HepG2 (cell line): ENCODE measurements at regions of chr2 and their contacts with region 1.

Region 1: DNA sequence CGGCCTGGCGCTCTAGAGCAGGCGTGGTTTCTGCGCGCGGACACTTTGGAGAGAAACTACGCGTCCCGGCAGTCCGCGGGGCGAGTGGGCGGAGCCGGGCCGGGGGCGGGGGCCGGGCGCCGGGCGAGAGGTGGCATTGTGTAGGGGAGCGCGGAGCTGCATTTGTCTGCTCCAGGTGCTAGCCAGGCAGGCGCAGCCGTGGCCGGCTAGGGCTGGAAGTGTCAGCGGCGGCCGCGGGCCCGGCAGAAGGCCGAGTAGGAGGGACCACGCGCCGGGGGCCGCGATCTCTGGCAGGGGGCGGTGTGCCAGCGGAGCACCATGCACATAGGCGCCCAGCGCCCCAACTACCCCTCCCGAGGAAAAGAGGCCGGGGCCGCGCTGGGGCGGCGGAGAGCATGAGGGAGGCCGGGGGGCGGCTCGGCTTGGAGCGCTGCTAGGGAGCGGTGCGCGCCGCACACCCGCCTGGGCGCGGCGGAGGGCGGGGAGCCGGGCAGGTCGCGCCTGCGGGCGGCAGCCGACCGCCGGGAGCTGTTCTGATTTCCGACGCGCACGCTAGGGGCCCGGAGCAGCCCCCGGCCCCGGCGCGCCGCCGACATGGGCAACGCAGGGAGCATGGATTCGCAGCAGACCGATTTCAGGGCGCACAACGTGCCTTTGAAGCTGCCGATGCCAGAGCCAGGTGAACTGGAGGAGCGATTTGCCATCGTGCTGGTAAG is at the start of gene FMNL2:
- DNase-seq: peak; percentile 88
- ATAC-seq: peak; percentile 91
- H3K4me3 ChIP-seq: peak within 1 kb of the TSS; percentile 95 to 98 (median 96)
- H3K27ac ChIP-seq: peak within 1 kb of the TSS; percentile 69
- H3K4me1 ChIP-seq: peaks cover 41% of the 10 kb centered on the region
- H3K27me3 ChIP-seq: peaks cover 0 to 20% of the 10 kb centered on the region in 2 experiments; a peak in 4 of 5 replicates
- CTCF ChIP-seq: peak; percentile 52
- EP300 ChIP-seq: peak in 1 of 2 experiments; percentile 44; a peak in 2 of 4 replicates
- POLR2A ChIP-seq: peak; percentile 93 to 97
- RAD21 ChIP-seq: peak; percentile 83
- total RNA-seq, gene FMNL2: 63.2 and 66.5 TPM in 2 replicates

Region 2: DNA sequence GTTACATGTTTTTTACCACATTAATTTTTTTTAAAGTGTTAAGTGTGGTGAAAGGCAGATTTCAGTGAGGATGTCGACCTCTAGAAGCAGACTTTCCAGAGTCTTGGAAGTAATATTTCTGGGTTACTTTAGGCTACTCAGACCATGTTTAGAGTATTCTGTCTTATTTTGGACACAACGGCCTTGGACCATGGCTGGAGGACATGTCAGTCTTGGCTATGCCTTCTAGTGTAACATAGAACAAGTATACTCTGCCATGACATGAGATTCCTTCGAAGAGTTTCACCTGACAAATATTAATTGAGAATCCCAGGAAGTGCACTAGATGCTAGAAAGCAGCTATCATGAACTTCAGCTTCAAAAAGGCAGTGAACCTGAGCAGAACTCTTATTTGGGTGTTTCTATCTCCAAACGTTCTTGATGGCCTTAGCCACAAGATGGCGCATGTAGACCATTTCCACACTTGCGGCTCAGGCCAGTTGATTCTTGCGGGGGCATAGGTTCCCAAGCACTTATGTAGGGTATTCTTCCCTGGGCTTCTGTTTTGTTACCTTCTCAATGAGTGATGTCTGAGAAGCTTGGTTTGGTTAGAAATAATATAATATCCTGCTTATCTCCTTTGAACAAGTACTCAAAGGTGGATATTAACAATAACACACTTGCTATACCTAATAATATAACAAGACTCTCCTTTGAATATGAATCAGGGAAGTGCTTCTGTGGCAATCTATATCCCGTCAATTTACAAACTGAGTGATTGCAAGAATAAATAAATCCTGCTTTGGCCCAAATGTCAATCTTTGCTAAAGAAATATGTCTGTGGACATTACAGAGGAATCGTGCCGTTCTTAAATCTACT is 298.3 kb before region 1 on chr2:
- CTCF ChIA-PET with region 1: no interaction called
- POLR2A ChIA-PET with region 1: no interaction called
- in situ Hi-C with region 1: no loop called
- intact Hi-C with region 1: loop called (anchors 5 kb)
- DNase-seq: peak; percentile 73
- ATAC-seq: peak; percentile 83
- H3K4me3 ChIP-seq: no peak overlapping the region
- H3K27ac ChIP-seq: no peak overlapping the region
- H3K4me1 ChIP-seq: no peaks in the 10 kb centered on the region
- H3K27me3 ChIP-seq: peaks cover 2 to 30% of the 10 kb centered on the region in 2 experiments; a peak in 2 of 5 replicates
- CTCF ChIP-seq: peak; percentile 93
- EP300 ChIP-seq: no peak
- POLR2A ChIP-seq: no peak
- RAD21 ChIP-seq: peak; percentile 77

Region 3: DNA sequence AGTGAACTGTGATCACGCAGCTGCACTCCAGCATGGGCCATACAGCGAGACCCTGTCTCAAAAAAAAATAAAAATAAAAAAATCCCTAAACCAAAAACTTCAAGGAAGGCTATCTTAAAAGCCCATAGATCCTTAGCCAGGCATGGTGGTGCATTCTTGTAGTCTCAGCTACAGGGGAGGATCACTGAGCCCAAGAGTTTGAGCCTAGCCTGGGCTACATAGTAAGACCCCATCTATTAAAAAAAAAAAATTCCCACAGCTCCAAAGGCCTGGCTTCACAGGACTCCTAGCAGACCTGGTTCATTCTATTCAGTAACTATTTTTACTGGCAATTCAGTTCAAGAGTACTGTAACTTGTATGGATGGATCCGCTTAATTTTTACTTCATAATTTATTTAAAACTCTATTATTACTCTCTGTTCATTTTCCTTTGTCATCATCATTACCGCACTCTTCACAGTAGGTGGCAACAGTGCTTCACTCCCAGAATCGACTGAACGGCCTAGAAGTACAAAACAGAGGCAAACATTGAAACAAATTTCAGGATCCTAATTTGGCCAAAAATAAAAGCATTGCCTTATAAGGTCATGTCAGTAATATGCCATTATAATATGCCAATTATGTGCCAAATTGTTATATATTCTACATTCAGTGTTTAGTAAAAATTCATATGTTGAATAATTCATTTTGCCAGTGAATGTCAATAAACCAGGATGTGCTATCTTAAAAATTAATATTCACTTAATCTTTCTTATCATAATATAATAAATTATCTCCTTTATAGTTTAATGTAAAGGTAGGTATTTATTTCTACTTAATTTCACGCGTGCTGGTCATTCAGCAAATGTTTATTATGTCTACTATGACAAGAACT is 145.3 kb before region 1 on chr2:
- CTCF ChIA-PET with region 1: no interaction called
- POLR2A ChIA-PET with region 1: no interaction called
- in situ Hi-C with region 1: no loop called
- intact Hi-C with region 1: loop called (anchors 2 kb)
- DNase-seq: peak; percentile 71
- ATAC-seq: peak; percentile 92
- H3K4me3 ChIP-seq: no peak overlapping the region
- H3K27ac ChIP-seq: no peak overlapping the region
- H3K4me1 ChIP-seq: peaks cover 18% of the 10 kb centered on the region; the same call in 1 of the 2 replicates
- H3K27me3 ChIP-seq: 0 out of 5 replicates have a peak, but pooled peaks cover 0 to 2% of the 10 kb centered on the region in 2 experiments
- CTCF ChIP-seq: peak; percentile 84
- EP300 ChIP-seq: no peak
- POLR2A ChIP-seq: no peak
- RAD21 ChIP-seq: peak; percentile 88

Region 4: DNA sequence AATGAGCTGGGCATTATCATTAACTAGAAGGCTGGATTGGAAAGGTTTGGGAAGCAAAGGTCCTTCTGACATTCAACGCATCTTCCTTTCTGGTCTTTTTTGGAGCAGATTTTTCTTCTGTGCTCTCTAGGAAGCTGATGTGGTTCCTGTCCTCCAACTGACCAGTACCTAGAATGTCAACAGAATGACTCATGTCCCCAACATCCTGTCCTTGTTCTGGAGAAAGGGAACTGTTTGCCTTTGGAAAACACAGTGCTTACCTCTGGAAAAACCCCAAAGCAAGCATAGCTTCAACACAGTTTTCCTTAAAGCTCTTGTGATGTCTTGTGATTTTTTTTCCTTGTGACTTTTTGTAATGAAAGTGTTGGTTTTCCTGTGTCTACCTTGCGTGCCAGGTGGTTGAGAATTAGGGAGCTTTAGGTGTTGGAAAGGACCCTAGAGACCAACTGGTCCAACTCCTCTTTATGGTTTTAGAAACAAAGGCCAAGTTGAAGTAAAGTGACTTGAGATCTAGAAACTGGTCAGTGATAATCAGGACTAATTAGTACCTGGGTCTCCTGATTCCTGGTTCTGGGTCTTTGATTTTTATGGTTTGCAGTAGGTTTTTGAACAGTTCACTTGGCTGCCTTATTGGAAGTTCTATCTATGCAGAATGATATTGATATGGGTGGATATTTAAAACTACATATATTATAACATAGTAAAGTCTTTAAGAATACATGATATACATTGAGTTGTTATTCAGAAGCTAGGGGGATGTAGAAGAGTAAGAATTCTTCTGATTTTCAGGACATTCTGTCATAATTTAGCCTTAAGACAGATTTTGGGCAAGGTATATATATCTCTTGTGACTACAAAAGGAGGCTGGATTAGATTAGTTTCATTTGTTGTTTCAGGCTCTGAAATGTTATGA is 70.3 kb after region 1 on chr2:
- CTCF ChIA-PET with region 1: no interaction called
- POLR2A ChIA-PET with region 1: interaction called, 11 read pairs
- in situ Hi-C with region 1: loop called (anchors 5 kb)
- intact Hi-C with region 1: loop called (anchors 5 kb)
- DNase-seq: peak; percentile 96
- ATAC-seq: peak; percentile 87
- H3K4me3 ChIP-seq: no peak overlapping the region
- H3K27ac ChIP-seq: peak overlapping the region; percentile 56
- H3K4me1 ChIP-seq: peaks cover 96% of the 10 kb centered on the region
- H3K27me3 ChIP-seq: no peaks in the 10 kb centered on the region
- CTCF ChIP-seq: no peak
- EP300 ChIP-seq: peak; percentile 57 to 97; a peak in 3 of 4 replicates
- POLR2A ChIP-seq: no peak
- RAD21 ChIP-seq: no peak

Region 5: DNA sequence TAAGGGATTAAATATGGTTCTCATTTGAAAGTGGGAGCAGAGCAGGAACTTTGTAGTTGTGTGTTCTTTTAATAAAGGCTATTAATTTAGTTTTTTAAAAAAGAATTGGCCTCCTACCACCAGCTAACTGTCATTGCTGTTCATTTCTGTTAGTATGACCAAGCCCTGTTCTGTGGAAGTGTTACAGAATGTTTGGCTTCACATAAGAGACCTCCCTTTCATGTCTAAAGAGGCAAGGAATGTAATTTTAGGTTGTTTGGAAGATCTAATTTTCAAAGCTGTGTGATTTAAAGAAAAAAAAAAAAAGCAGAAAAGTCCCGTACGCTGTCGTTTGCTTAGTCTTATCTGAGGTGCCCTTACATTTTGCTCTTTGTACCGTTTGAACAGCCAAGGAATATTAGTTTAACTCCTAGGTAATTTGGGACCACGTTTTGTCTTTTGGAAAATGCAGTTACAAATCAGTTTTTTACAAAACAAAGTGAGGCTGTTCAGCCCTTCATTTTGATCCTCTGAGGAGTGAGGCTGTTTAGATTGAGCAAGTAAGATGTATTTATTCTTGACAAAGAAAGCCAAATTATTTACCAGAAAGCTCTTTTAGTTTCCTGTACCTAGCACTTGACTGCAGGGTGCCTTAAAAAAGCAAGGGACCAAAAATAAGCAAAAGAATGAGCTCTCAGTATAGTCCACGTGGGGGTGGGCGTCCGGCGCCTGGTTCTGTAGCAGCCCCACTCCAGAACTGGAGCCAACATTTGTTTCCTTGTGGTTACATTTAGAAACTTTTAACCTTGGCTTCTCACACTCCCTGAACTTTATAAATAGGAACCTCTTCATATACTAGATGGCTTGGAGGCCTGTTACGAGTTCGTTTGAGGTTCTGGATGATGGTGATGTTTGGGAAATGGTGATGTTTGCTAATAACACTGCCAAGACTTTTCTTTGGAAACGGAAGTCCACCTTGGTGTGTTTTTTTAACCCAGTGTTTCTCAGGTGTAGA is 136.0 kb after region 1 on chr2:
- CTCF ChIA-PET with region 1: no interaction called
- POLR2A ChIA-PET with region 1: interaction called, 4 read pairs
- in situ Hi-C with region 1: no loop called
- intact Hi-C with region 1: loop called (anchors 5 kb)
- DNase-seq: peak; percentile 46
- ATAC-seq: peak; percentile 29
- H3K4me3 ChIP-seq: peak overlapping the region in 2 of 3 experiments; percentile 29 to 34; a peak in 3 of 6 replicates
- H3K27ac ChIP-seq: peak overlapping the region; percentile 57
- H3K4me1 ChIP-seq: peaks cover 98% of the 10 kb centered on the region
- H3K27me3 ChIP-seq: no peaks in the 10 kb centered on the region
- CTCF ChIP-seq: no peak
- EP300 ChIP-seq: peak in 1 of 2 experiments; percentile 42; a peak in 1 of 4 replicates
- POLR2A ChIP-seq: no peak
- RAD21 ChIP-seq: no peak

Region 6: GRCh38 chr2:152505495-152505906 is 170.3 kb after region 1 on chr2:
- CTCF ChIA-PET with region 1: no interaction called
- POLR2A ChIA-PET with region 1: no interaction called
- in situ Hi-C with region 1: no loop called
- intact Hi-C with region 1: no loop called
- DNase-seq: no peak
- ATAC-seq: no peak
- H3K4me3 ChIP-seq: no peak overlapping the region
- H3K27ac ChIP-seq: no peak overlapping the region
- H3K4me1 ChIP-seq: peaks cover 51% of the 10 kb centered on the region
- H3K27me3 ChIP-seq: no peaks in the 10 kb centered on the region
- CTCF ChIP-seq: no peak
- EP300 ChIP-seq: no peak
- POLR2A ChIP-seq: no peak
- RAD21 ChIP-seq: no peak

Region 7: DNA sequence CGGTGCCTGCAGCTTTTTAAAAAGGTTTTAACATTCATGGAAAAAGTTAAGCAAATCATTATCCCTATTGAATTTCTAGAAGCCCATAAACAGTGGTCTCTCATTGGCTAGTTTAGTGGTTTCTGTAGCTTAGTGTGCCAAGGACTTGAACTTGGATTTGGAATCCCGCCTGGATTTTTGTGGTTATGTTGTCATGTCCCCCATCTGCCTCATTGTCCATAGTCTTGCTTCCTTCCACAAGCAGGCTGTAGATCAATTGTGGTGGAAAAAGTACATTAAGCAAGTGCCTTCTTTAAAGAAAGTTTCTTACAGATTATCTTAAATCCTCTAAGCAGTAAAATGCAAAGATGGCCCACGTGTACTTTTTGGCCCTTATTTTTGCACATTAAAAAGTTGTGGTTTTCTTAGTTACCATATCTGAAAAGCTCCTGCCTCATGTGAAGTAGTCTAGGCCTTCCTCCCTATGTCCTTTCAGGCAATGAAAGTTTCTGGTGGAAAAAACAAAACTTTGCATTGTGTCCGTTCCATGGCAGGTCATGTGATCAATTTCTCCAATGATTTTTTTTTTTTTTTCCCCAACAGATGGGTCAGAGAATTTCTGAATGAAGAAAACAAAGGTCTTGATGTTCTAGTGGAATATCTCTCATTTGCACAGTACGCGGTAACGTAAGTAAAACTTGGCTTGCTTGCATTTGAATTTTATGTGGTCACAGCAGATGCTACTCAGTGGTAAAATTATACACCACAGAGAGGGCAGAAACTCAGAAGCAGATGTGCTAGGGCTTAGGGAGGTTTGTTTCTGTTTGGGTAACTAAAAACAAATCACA is 223.2 kb after region 1 on chr2:
- CTCF ChIA-PET with region 1: no interaction called
- POLR2A ChIA-PET with region 1: no interaction called
- in situ Hi-C with region 1: no loop called
- intact Hi-C with region 1: loop called (anchors 5 kb)
- DNase-seq: no peak
- ATAC-seq: no peak
- H3K4me3 ChIP-seq: no peak overlapping the region
- H3K27ac ChIP-seq: no peak overlapping the region
- H3K4me1 ChIP-seq: no peaks in the 10 kb centered on the region
- H3K27me3 ChIP-seq: no peaks in the 10 kb centered on the region
- CTCF ChIP-seq: no peak
- EP300 ChIP-seq: no peak
- POLR2A ChIP-seq: no peak
- RAD21 ChIP-seq: no peak

Region 8: DNA sequence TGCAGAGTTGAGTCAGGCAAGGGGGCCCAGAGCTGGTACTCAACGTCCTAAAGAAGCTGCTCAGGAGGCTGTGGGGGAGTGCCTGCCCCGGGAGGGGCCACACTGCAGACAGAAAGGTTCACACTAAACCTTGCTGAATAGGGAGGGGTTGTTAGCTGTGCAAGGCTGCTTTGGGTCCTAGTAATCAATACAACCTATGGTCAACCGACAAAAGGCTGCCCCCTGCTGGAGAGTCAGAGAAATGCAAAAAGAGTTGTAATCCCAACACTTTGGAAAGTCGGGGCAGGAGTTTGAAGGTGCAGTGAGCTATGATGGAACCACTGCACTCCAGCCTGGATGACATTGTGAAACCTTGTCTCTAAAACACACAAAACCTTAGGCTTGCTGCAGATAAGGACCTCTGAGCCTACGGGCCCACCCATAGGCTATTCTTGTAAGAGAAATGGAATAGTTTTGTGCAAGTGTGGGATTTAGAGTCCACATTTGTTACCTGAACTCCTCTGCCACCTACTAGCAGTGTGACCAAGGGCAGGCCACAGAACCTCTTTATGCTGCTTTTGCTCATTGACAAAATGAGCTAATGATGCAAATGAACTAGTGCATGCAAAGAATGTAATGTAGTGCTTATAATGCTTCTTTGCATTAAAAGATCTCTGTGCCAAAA is 300.6 kb after region 1 on chr2:
- CTCF ChIA-PET with region 1: no interaction called
- POLR2A ChIA-PET with region 1: no interaction called
- in situ Hi-C with region 1: loop called (anchors 10 kb)
- intact Hi-C with region 1: no loop called
- DNase-seq: peak; percentile 76
- ATAC-seq: peak; percentile 77
- H3K4me3 ChIP-seq: no peak overlapping the region
- H3K27ac ChIP-seq: no peak overlapping the region
- H3K4me1 ChIP-seq: peaks cover 5% of the 10 kb centered on the region; the same call in 1 of the 2 replicates
- H3K27me3 ChIP-seq: no peaks in the 10 kb centered on the region
- CTCF ChIP-seq: peak; percentile 94
- EP300 ChIP-seq: no peak
- POLR2A ChIP-seq: no peak
- RAD21 ChIP-seq: peak; percentile 87